ENCODE measurements at regions of chr2 and their contacts with region 1.

Region 1: DNA sequence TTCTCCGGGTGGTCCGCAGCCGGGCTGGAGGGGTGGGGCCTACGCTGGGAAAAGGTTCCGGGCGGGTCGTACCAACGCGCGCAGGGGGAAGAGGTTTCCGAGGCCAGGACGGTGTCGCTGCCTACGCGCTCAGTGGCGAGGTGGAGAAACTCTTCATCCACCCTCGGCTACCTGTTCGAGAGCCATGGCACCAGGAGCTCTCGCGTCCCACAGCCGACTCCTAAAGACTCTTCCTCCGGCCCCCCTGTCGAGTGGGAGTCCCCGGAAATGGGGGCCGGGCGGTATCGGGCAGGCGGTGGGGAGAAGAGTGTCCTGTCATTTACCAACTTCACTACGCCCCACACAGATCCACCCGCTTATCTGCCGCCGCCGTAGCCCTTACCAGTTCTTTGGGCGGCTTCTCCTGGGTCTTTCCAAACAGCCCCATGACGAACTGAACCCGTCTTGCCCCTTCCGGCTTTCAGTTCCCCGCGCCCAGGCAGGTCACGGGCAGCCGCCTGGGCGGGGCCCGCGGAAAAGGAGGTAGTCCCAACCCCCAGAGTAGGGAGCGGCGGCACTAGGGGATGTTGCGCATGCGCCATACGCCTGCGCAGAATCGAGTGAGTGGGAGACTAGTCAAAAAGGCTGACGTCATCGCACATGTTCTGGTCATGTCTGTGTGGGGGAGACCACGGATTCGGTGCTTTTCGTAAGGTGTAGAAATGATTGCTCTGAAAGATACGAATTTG is at the start of gene CHMP3:
- DNase-seq: peak; percentile 96 to 98
- H3K4me3 ChIP-seq: peak within 1 kb of the TSS; percentile 62 to 85
- H3K27ac ChIP-seq: peak within 1 kb of the TSS; percentile 89 to 99
- H3K4me1 ChIP-seq: peaks cover 0 to 33% (median 16%) of the 10 kb centered on the region in 4 donors
- H3K27me3 ChIP-seq: no peaks in the 10 kb centered on the region
- CTCF ChIP-seq: no peak

Region 2: GRCh38 chr2:86225581-86225980 is 337.5 kb before region 1 on chr2:
- intact Hi-C with region 1: no loop called
- DNase-seq: peak; percentile 70 to 93
- H3K4me3 ChIP-seq: peak overlapping the region; percentile 39 to 40
- H3K27ac ChIP-seq: peak overlapping the region; percentile 91
- H3K4me1 ChIP-seq: peaks cover 0 to 54% (median 41%) of the 10 kb centered on the region in 4 donors
- H3K27me3 ChIP-seq: no peaks in the 10 kb centered on the region
- CTCF ChIP-seq: no peak

Region 3: GRCh38 chr2:86623651-86624541 is 60.8 kb after region 1 on chr2 and contains the start of gene RNF103:
- intact Hi-C with region 1: loop called (anchors 2 kb)
- DNase-seq: peak; percentile 97 to 98
- H3K4me3 ChIP-seq: peak within 1 kb of the TSS; percentile 71 to 88
- H3K27ac ChIP-seq: peak within 1 kb of the TSS; percentile 93
- H3K4me1 ChIP-seq: peaks cover 0 to 26% (median 15%) of the 10 kb centered on the region in 4 donors
- H3K27me3 ChIP-seq: no peaks in the 10 kb centered on the region
- CTCF ChIP-seq: no peak

Measured in tibial artery (tissue), 4 donors.